Dendritic cell treated with granulocyte-macrophage colony-stimulating factor and Interleukin-4, amounts not matched to agents 40 ng/mL and 50 ng/mL, for 4 days (primary cell): ENCODE measurements at regions of chr4 and their contacts with region 1.

Region 1: DNA sequence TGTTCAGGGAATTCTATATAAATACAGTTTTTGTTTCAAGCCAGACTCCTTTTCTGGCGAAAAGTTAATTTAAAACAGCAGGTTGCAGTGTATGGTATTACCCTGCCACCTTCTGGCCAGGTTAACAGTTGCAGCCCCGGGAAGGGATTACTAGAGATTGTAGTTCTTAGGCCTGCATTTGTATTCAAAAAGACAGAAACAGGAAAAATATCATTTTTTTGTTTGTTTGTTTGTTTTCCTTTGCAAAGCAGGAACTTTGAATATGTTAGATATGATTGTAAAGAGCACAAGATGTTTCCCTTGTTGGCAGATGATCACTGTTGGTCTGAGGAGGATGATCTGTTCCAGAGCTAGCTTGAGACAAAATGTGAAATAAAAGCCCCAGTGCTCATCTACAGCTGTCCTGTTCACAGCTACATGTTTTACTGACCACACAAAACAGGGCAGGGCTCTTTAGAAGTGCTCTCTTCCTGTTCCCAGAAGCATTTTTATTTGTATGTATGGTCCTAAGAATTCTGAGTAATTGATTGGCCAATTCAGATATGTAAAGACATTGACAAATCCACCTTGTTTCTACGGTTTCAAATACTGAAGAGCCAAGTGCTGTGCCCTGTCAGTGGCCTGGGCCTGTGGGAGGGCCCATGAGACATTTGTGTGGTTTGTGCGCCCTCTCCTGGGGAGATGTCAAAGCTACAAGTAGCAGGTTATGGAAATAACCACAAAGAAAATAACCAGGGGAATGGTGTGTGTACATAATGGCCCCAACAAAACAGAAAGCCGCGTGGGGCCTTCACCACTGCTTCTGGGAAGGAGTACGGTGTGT is 57.9 kb downstream of the CLDN22 start:
- H3K4me3 Mint-ChIP-seq: no peak overlapping the region
- H3K27ac Mint-ChIP-seq: no peak overlapping the region
- H3K4me1 Mint-ChIP-seq: peaks cover 4% of the 10 kb centered on the region
- H3K27me3 Mint-ChIP-seq: no peaks in the 10 kb centered on the region

Region 2: DNA sequence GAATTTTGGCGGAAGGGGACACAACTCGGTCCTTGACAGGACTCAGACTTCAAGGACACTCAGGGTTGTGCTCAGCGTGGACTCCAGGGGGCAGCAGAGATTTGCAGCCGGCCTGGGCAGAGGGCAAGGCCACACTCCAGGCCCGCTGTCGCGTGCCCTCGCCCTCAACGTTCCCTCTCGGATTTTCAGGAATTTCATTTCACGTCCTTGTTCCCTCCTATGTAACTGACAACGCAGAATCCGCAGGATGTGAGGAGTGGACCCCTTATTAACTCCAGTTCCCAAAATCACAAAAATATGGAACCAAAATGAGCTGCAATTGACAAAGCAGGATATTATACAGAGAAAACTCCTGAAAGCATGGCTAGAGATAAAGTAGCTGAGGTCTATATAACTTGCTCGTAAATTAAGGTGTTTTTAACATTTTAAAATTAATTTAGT is 323.9 kb before region 1 on chr4:
- intact Hi-C with region 1: loop called (anchors 1 kb)
- H3K4me3 Mint-ChIP-seq: no peak overlapping the region
- H3K27ac Mint-ChIP-seq: no peak overlapping the region
- H3K4me1 Mint-ChIP-seq: no peaks in the 10 kb centered on the region
- H3K27me3 Mint-ChIP-seq: peaks cover 18% of the 10 kb centered on the region

Region 3: DNA sequence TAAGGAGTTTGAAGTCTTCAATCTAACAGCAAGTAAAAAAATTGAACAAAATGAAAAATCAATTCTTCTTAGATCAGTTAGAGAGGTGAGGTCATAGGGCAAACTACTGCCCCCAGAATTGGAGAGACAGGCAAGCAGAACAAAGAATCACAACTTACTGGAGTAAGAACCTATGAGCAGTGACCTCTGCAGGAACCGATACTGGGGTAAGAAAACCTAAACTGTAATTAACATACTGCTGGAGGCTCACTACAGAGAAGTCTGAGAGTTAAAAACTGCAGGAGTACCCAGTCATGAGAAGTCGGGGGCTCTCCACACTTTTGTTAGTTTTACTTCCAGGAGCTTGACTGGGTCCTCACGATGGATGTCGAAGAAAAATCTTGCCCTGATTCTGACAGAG is 41.9 kb after region 1 on chr4:
- intact Hi-C with region 1: no loop called
- H3K4me3 Mint-ChIP-seq: no peak overlapping the region
- H3K27ac Mint-ChIP-seq: no peak overlapping the region
- H3K4me1 Mint-ChIP-seq: no peaks in the 10 kb centered on the region
- H3K27me3 Mint-ChIP-seq: no peaks in the 10 kb centered on the region

Region 4: GRCh38 chr4:183407128-183407585 is 145.0 kb after region 1 on chr4:
- intact Hi-C with region 1: loop called (anchors 5 kb)
- H3K4me3 Mint-ChIP-seq: peak overlapping the region; percentile 58
- H3K27ac Mint-ChIP-seq: peak overlapping the region; percentile 33
- H3K4me1 Mint-ChIP-seq: peaks cover 29% of the 10 kb centered on the region
- H3K27me3 Mint-ChIP-seq: peaks cover 12% of the 10 kb centered on the region